ENCODE measurements at regions of chr16 and their contacts with region 1.

Region 1: DNA sequence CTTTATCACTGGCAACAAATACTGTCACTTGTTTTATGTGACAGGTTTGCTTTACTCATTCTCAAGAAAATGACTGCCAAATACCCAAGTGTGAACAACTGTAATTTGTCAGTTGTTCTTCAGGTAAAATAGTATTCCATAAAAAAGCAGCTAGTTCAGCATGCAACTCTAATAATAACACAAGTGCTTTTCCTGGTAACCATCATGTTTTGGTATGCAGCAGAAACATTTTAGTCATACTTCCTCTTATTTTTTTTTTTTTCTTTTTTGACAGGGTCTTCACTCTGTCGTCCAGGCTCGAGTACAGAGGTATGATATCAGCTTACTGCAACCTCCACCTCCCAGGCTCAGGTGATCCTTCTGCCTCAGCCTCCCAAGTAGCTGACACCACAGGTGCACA is 4.6 kb downstream of the TERF2 start:
- DNase-seq: no peak
- H3K4me3 Mint-ChIP-seq: no peak overlapping the region
- H3K27ac Mint-ChIP-seq: peak overlapping the region; percentile 38
- H3K4me1 Mint-ChIP-seq: peaks cover 53% of the 10 kb centered on the region
- H3K27me3 Mint-ChIP-seq: no peaks in the 10 kb centered on the region

Region 2: GRCh38 chr16:68332411-68333121 is 1048.7 kb before region 1 on chr16:
- CTCF ChIA-PET with region 1: no interaction called
- POLR2A ChIA-PET with region 1: no interaction called
- intact Hi-C with region 1: no loop called
- DNase-seq: no peak
- H3K4me3 Mint-ChIP-seq: no peak overlapping the region
- H3K27ac Mint-ChIP-seq: peak overlapping the region; percentile 50
- H3K4me1 Mint-ChIP-seq: peaks cover 17% of the 10 kb centered on the region
- H3K27me3 Mint-ChIP-seq: no peaks in the 10 kb centered on the region

Region 3: GRCh38 chr16:69367980-69368379 is 13.3 kb before region 1 on chr16:
- CTCF ChIA-PET with region 1: no interaction called
- POLR2A ChIA-PET with region 1: interaction called, 3 read pairs
- intact Hi-C with region 1: loop called (anchors 2 kb)
- DNase-seq: no peak
- H3K4me3 Mint-ChIP-seq: no peak overlapping the region
- H3K27ac Mint-ChIP-seq: no peak overlapping the region
- H3K4me1 Mint-ChIP-seq: peaks cover 18% of the 10 kb centered on the region
- H3K27me3 Mint-ChIP-seq: no peaks in the 10 kb centered on the region

Measured in activated CD4-positive, alpha-beta memory T cell treated with anti-CD3 and anti-CD28 coated beads for 36 hours (primary cell).